Activated CD4-positive, alpha-beta memory T cell treated with anti-CD3 and anti-CD28 coated beads, Interleukin-2, amount 10 ng/mL, durations not matched to agents 7 days and 5 days (primary cell): ENCODE measurements at regions of chr5 and their contacts with region 1.

Region 1: GRCh38 chr5:10452768-10453331 is 11.2 kb downstream of the ROPN1L start:
- DNase-seq: peak; percentile 26
- H3K4me3 Mint-ChIP-seq: no peak overlapping the region
- H3K27ac Mint-ChIP-seq: no peak overlapping the region
- H3K4me1 Mint-ChIP-seq: peaks cover 22% of the 10 kb centered on the region
- H3K27me3 Mint-ChIP-seq: no peaks in the 10 kb centered on the region

Region 2: DNA sequence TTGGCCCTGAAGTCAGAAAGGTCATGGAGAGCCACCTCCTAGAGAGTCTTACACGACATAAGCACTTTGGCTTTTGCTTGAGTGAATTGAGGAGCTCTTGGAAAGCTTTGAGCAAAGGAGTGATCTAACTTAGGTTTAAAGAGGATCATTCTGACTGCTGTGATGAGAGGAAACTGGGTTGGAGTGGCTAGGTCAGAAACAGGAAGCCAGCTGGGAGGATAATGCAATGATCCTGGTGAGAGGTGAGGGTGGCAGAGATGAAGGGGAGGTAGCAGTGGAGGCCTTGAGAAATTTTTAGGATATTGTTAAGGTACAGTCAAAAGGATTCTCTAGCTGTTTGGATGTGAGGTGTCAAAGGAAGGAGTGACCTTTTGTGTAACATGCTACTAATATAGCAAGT is 43.3 kb before region 1 on chr5:
- CTCF ChIA-PET with region 1: no interaction called
- POLR2A ChIA-PET with region 1: no interaction called
- DNase-seq: no peak
- H3K4me3 Mint-ChIP-seq: no peak overlapping the region
- H3K27ac Mint-ChIP-seq: peak overlapping the region; percentile 24
- H3K4me1 Mint-ChIP-seq: peaks cover 9% of the 10 kb centered on the region
- H3K27me3 Mint-ChIP-seq: no peaks in the 10 kb centered on the region

Region 3: GRCh38 chr5:10621832-10622231 is 169.0 kb after region 1 on chr5:
- CTCF ChIA-PET with region 1: interaction called, 118 read pairs
- POLR2A ChIA-PET with region 1: interaction called, 4 read pairs
- DNase-seq: no peak
- H3K4me3 Mint-ChIP-seq: no peak overlapping the region
- H3K27ac Mint-ChIP-seq: peak overlapping the region; percentile 61
- H3K4me1 Mint-ChIP-seq: peaks cover 17% of the 10 kb centered on the region
- H3K27me3 Mint-ChIP-seq: no peaks in the 10 kb centered on the region

Region 4: GRCh38 chr5:10689391-10690081 is 236.7 kb after region 1 on chr5:
- CTCF ChIA-PET with region 1: interaction called, 27 read pairs
- POLR2A ChIA-PET with region 1: interaction called, 3 read pairs
- DNase-seq: peak; percentile 57
- H3K4me3 Mint-ChIP-seq: no peak overlapping the region
- H3K27ac Mint-ChIP-seq: no peak overlapping the region
- H3K4me1 Mint-ChIP-seq: peaks cover 20% of the 10 kb centered on the region
- H3K27me3 Mint-ChIP-seq: no peaks in the 10 kb centered on the region